CD8-positive, alpha-beta T cell (primary cell): ENCODE measurements at regions of chr7 and their contacts with region 1.

Region 1: GRCh38 chr7:17651926-17652385 is 288.3 kb downstream of the SNX13 start:
- DNase-seq: no peak
- ATAC-seq: no peak
- H3K4me3 ChIP-seq: no peak overlapping the region
- H3K4me3 Mint-ChIP-seq: no peak overlapping the region
- H3K27ac ChIP-seq: no peak overlapping the region
- H3K27ac Mint-ChIP-seq: no peak overlapping the region
- H3K4me1 ChIP-seq: no peaks in the 10 kb centered on the region
- H3K4me1 Mint-ChIP-seq: no peaks in the 10 kb centered on the region
- H3K27me3 ChIP-seq: no peaks in the 10 kb centered on the region
- H3K27me3 Mint-ChIP-seq: peaks cover 10% of the 10 kb centered on the region
- CTCF ChIP-seq: no peak

Region 2: GRCh38 chr7:16098585-16099179 is 1553.3 kb before region 1 on chr7:
- CTCF ChIA-PET with region 1: no interaction called
- POLR2A ChIA-PET with region 1: no interaction called
- intact Hi-C with region 1: loop called in 1 of 2 experiments (anchors 10 kb)
- DNase-seq: no peak
- ATAC-seq: no peak
- H3K4me3 ChIP-seq: no peak overlapping the region
- H3K4me3 Mint-ChIP-seq: no peak overlapping the region
- H3K27ac ChIP-seq: no peak overlapping the region
- H3K27ac Mint-ChIP-seq: no peak overlapping the region
- H3K4me1 ChIP-seq: no peaks in the 10 kb centered on the region
- H3K4me1 Mint-ChIP-seq: no peaks in the 10 kb centered on the region
- H3K27me3 ChIP-seq: no peaks in the 10 kb centered on the region
- H3K27me3 Mint-ChIP-seq: no peaks in the 10 kb centered on the region
- CTCF ChIP-seq: no peak

Region 3: DNA sequence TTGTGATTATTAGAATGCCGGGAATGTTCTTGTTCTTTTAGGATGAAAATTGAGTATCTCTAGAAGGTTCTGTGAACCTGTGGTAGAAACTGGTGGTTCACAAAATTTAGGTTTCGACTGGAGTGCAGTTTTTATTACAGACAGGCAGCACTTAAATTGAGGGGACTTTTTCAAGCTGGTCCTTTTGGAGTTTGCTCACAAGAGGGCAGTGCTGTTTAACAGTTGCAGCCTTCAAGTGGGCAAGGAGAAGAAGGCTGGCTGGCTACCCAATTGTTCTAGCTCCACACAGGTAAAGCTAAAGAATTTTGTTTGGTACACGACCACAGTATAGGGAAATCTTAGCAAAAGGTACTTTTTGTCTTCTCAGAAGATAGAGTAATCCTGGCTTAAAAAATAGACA is 54.8 kb after region 1 on chr7:
- CTCF ChIA-PET with region 1: no interaction called
- POLR2A ChIA-PET with region 1: no interaction called
- intact Hi-C with region 1: loop called in 1 of 2 experiments (anchors 5 kb)
- DNase-seq: peak in 5 of 9 experiments; percentile 10 to 57 (median 22)
- ATAC-seq: peak; percentile 40
- H3K4me3 ChIP-seq: no peak overlapping the region
- H3K4me3 Mint-ChIP-seq: no peak overlapping the region
- H3K27ac ChIP-seq: no peak overlapping the region
- H3K27ac Mint-ChIP-seq: no peak overlapping the region
- H3K4me1 ChIP-seq: no peaks in the 10 kb centered on the region
- H3K4me1 Mint-ChIP-seq: no peaks in the 10 kb centered on the region
- H3K27me3 ChIP-seq: no peaks in the 10 kb centered on the region
- H3K27me3 Mint-ChIP-seq: no peaks in the 10 kb centered on the region
- CTCF ChIP-seq: peak; percentile 39